Pancreas (tissue), 10 donors: ENCODE measurements at regions of chr22 and their contacts with region 1.

Region 1: DNA sequence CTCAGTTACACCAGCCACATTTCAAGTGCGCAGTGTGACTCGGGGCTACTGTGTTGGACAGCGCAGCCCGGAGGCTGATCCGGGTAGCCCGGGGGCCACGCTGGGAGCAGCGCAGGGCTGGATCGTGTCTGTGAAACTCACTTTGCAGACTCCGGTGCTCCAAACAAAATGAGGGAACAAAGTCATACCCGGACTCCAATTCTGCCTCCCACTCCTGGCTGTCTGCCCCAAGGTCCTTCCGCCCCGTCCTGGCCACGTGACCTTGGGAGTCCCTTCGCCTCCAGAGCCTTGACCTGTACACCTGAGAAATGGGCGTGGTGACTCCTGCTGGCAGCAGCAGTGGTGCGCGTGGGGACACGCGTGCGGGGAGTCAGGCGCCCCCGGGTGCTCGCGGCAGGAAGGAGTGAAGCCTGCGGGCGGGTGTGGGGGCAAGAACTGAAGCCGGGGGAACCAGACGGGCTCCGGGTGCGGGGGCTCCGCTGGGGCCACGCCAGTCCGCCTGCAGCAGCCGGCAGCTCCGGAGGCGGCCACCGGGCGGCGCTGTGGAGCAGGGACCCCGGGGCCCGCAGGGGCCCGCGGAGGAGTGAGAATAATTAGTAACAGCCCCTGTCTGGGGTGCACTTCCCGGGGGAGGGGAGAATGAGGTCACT is 42.4 kb downstream of the KCNJ4 start:
- DNase-seq: peak in 5 of 6 donors; percentile 44 to 79 (median 59)
- ATAC-seq: peak; percentile 67 to 83 (median 76)
- H3K4me3 ChIP-seq: peak overlapping the region in 2 of 4 donors; percentile 14 to 44
- H3K27ac ChIP-seq: no peak overlapping the region
- H3K4me1 ChIP-seq: peaks cover 0 to 4% (median 0%) of the 10 kb centered on the region in 3 donors
- H3K27me3 ChIP-seq: no peaks in the 10 kb centered on the region
- CTCF ChIP-seq: peak; percentile 64 to 79 (median 70)

Region 2: GRCh38 chr22:38305471-38306448 is 106.8 kb before region 1 on chr22:
- intact Hi-C with region 1: no loop called
- DNase-seq: no peak
- ATAC-seq: peak; percentile 44 to 65 (median 56)
- H3K4me3 ChIP-seq: peak overlapping the region in 1 of 4 donors; percentile 5
- H3K27ac ChIP-seq: peak overlapping the region in 3 of 4 donors; percentile 55 to 69 (median 57)
- H3K4me1 ChIP-seq: peaks cover 21 to 25% (median 25%) of the 10 kb centered on the region in 3 donors
- H3K27me3 ChIP-seq: no peaks in the 10 kb centered on the region
- CTCF ChIP-seq: no peak

Region 3: DNA sequence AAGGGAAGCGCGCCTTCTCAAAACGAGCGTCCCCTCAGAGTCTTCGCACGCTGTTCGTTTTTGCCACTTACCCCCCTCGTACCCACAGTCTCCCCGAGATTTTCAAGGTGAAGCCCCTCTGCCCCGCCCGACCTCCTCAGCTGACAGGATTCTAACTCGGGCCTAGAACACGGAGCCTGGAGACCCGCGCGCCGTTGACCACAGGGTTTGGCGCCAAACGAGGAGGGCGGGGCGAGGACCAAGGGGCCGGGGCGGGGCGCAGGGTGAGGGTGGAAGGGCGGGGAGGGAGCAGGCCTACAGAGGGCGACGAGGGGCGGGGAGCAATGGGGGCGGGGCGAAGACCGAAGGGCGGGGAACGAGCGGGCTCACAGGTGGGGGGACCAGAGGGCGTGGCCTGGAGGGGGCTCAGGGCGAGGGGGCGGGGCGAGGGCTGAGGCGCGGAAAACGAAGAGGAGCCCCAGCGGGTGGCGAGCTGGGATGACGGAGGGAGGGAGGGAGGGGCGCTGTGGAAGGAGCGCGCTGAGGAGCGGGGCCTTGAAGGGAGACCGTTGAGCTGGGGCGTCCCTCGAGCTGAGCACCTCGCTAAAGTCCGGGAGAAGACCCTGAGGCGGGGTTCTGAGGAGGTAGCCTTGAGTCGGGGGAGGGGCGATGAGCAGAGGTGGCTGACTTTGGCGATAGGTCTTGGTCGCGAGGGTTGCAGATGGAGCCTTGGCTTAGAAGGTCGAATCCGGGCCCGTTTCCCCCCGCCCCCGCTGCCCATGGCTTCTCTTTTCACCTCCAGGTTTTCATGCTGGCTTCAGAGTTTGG is 157.6 kb after region 1 on chr22 and contains the start of gene DMC1:
- intact Hi-C with region 1: loop called in 1 of 3 experiments (anchors 5 kb)
- DNase-seq: peak; percentile 93 to 97 (median 96)
- ATAC-seq: peak; percentile 96 to 99 (median 96)
- H3K4me3 ChIP-seq: peak within 1 kb of the TSS; percentile 36 to 60 (median 45)
- H3K27ac ChIP-seq: no peak within 1 kb of the TSS
- H3K4me1 ChIP-seq: peaks cover 0 to 7% (median 4%) of the 10 kb centered on the region in 3 donors
- H3K27me3 ChIP-seq: no peaks in the 10 kb centered on the region
- CTCF ChIP-seq: no peak
- total RNA-seq, gene DMC1: 0.19 to 0.28 (median 0.26) TPM in 3 of 6 donors, not detected in the others